Right ventricle myocardium inferior (tissue), 1 donor: ENCODE measurements at regions of chr9 and their contacts with region 1.

Region 1: GRCh38 chr9:4967523-4967922 is 17.5 kb upstream of the JAK2 start:
- DNase-seq: no peak
- ATAC-seq: peak; percentile 62

Region 2: DNA sequence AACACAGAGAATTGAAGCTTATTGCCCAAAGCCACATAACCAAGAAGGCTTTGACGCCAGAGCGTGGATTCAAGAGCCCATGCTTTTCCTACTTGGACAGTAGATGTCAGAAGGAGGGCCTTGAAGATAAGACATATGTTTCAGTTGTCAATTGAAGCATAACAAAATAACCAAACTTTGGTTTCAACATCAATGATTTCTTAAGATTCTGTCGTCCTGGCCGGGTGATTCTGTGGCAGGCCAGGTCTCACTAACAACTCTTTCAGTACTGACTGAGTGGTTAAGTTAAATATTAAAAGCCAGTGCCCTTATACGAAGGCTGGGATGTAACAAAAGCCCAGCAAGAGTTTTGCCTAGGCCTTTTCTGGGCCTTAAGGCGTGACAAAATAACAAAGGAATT is 80.8 kb before region 1 on chr9:
- intact Hi-C with region 1: loop called (anchors 10 kb)
- DNase-seq: no peak
- ATAC-seq: no peak